B cell (primary cell): ENCODE measurements at regions of chr16 and their contacts with region 1.

Region 1: GRCh38 chr16:2883027-2883851 is at the start of gene FLYWCH2:
- DNase-seq: peak; percentile 99
- ATAC-seq: peak; percentile 81
- H3K4me3 ChIP-seq: peak within 1 kb of the TSS; percentile 64 to 85 (median 77)
- H3K4me3 Mint-ChIP-seq: peak within 1 kb of the TSS; percentile 97
- H3K27ac ChIP-seq: peak within 1 kb of the TSS; percentile 86 to 89
- H3K27ac Mint-ChIP-seq: peak within 1 kb of the TSS; percentile 98
- H3K4me1 ChIP-seq: peaks cover 6 to 14% of the 10 kb centered on the region in 2 donors
- H3K4me1 Mint-ChIP-seq: peaks cover 12% of the 10 kb centered on the region
- H3K27me3 ChIP-seq: peaks cover 0 to 2% (median 0%) of the 10 kb centered on the region in 4 experiments
- H3K27me3 Mint-ChIP-seq: no peaks in the 10 kb centered on the region
- CTCF ChIP-seq: no peak
- total RNA-seq, gene FLYWCH2: 22.3 and 26.5 TPM in 2 replicates

Region 2: GRCh38 chr16:2752035-2752849 is 131.0 kb before region 1 on chr16 and contains the start of gene SRRM2:
- CTCF ChIA-PET with region 1: no interaction called
- POLR2A ChIA-PET with region 1: no interaction called
- intact Hi-C with region 1: loop called (anchors 2 kb)
- DNase-seq: peak; percentile 100
- ATAC-seq: peak; percentile 83
- H3K4me3 ChIP-seq: peak within 1 kb of the TSS; percentile 68 to 97 (median 82)
- H3K4me3 Mint-ChIP-seq: peak within 1 kb of the TSS; percentile 95
- H3K27ac ChIP-seq: peak within 1 kb of the TSS; percentile 95 to 98
- H3K27ac Mint-ChIP-seq: peak within 1 kb of the TSS; percentile 99
- H3K4me1 ChIP-seq: peaks cover 36 to 45% of the 10 kb centered on the region in 2 donors
- H3K4me1 Mint-ChIP-seq: peaks cover 50% of the 10 kb centered on the region
- H3K27me3 ChIP-seq: no peaks in the 10 kb centered on the region
- H3K27me3 Mint-ChIP-seq: no peaks in the 10 kb centered on the region
- CTCF ChIP-seq: no peak
- total RNA-seq, gene SRRM2: 1,470 and 1,485 TPM in 2 replicates

Region 3: GRCh38 chr16:2816751-2817339 is 66.4 kb before region 1 on chr16 and contains the start of gene PRSS21:
- CTCF ChIA-PET with region 1: no interaction called
- POLR2A ChIA-PET with region 1: no interaction called
- intact Hi-C with region 1: no loop called
- DNase-seq: no peak
- ATAC-seq: peak; percentile 33
- H3K4me3 ChIP-seq: peak within 1 kb of the TSS in 1 of 5 experiments; percentile 21
- H3K4me3 Mint-ChIP-seq: no peak within 1 kb of the TSS
- H3K27ac ChIP-seq: no peak within 1 kb of the TSS
- H3K27ac Mint-ChIP-seq: no peak within 1 kb of the TSS
- H3K4me1 ChIP-seq: no peaks in the 10 kb centered on the region
- H3K4me1 Mint-ChIP-seq: no peaks in the 10 kb centered on the region
- H3K27me3 ChIP-seq: peaks cover 0 to 6% (median 0%) of the 10 kb centered on the region in 4 experiments
- H3K27me3 Mint-ChIP-seq: peaks cover 13% of the 10 kb centered on the region
- CTCF ChIP-seq: no peak
- total RNA-seq, gene PRSS21: 1.8 and 2.0 TPM in 2 replicates

Region 4: GRCh38 chr16:2897113-2897512 is 13.9 kb after region 1 on chr16:
- CTCF ChIA-PET with region 1: interaction called, 10 read pairs
- POLR2A ChIA-PET with region 1: interaction called, 8 read pairs
- intact Hi-C with region 1: loop called (anchors 2 kb)
- DNase-seq: peak; percentile 85
- ATAC-seq: peak; percentile 100
- H3K4me3 ChIP-seq: no peak overlapping the region
- H3K4me3 Mint-ChIP-seq: peak overlapping the region; percentile 70
- H3K27ac ChIP-seq: no peak overlapping the region
- H3K27ac Mint-ChIP-seq: peak overlapping the region; percentile 50
- H3K4me1 ChIP-seq: peaks cover 17 to 21% of the 10 kb centered on the region in 2 donors
- H3K4me1 Mint-ChIP-seq: peaks cover 13% of the 10 kb centered on the region
- H3K27me3 ChIP-seq: no peaks in the 10 kb centered on the region
- H3K27me3 Mint-ChIP-seq: no peaks in the 10 kb centered on the region
- CTCF ChIP-seq: no peak

Region 5: DNA sequence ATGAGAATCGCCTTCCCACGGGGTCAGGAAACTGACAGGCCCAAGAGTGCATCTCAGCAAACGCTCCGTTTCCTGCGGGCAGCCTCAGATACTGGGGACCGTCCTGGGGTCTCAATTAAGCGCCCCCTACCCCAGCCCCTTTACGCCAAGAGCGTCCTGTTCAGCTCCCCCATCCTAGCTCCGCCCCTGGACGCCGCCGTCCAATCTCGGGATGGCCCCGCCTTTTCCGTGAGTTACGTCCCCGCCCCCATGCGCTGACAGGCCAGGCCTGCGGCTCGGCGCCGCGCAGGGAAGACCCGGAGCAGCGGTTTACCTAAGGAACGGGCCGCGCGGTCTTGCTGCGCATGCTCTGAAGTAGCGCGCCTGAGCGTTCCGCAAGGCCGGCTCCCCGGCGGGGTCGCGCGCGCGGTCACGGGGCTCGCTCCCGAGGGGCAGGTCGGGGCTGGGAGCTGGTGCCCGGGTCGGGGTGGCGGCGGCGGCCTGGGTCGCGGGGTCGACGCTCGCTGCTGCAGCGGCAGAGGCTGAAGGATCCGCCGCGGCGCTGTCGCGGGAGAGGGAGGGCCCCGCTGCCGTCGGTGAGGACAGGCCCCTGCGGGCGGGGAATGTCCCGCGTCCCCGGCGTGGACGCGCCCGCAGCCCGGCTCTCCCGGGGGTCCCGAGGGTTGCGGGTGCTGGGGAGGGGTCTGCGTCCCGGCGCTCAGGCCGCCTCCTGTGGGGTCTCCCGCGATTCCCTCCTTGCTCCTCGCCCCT is 28.5 kb after region 1 on chr16 and contains the start of gene FLYWCH1:
- CTCF ChIA-PET with region 1: interaction called, 61 read pairs
- POLR2A ChIA-PET with region 1: interaction called, 18 read pairs
- intact Hi-C with region 1: loop called (anchors 1 kb)
- DNase-seq: peak; percentile 98
- ATAC-seq: peak; percentile 99
- H3K4me3 ChIP-seq: peak within 1 kb of the TSS; percentile 50 to 77 (median 70)
- H3K4me3 Mint-ChIP-seq: peak within 1 kb of the TSS; percentile 96
- H3K27ac ChIP-seq: peak within 1 kb of the TSS; percentile 38 to 66
- H3K27ac Mint-ChIP-seq: peak within 1 kb of the TSS; percentile 92
- H3K4me1 ChIP-seq: peaks cover 11 to 18% of the 10 kb centered on the region in 2 donors
- H3K4me1 Mint-ChIP-seq: peaks cover 29% of the 10 kb centered on the region
- H3K27me3 ChIP-seq: no peaks in the 10 kb centered on the region
- H3K27me3 Mint-ChIP-seq: no peaks in the 10 kb centered on the region
- CTCF ChIP-seq: no peak
- total RNA-seq, gene FLYWCH1: 119 and 120 TPM in 2 replicates

Region 6: GRCh38 chr16:2926650-2927646 is 43.7 kb after region 1 on chr16:
- CTCF ChIA-PET with region 1: interaction called, 61 read pairs
- POLR2A ChIA-PET with region 1: interaction called, 4 read pairs
- intact Hi-C with region 1: loop called (anchors 2 kb)
- DNase-seq: peak; percentile 91
- ATAC-seq: peak; percentile 100
- H3K4me3 ChIP-seq: no peak overlapping the region
- H3K4me3 Mint-ChIP-seq: peak overlapping the region; percentile 17
- H3K27ac ChIP-seq: no peak overlapping the region
- H3K27ac Mint-ChIP-seq: no peak overlapping the region
- H3K4me1 ChIP-seq: peaks cover 4 to 9% of the 10 kb centered on the region in 2 donors
- H3K4me1 Mint-ChIP-seq: peaks cover 7% of the 10 kb centered on the region
- H3K27me3 ChIP-seq: no peaks in the 10 kb centered on the region
- H3K27me3 Mint-ChIP-seq: no peaks in the 10 kb centered on the region
- CTCF ChIP-seq: peak; percentile 94

Region 7: DNA sequence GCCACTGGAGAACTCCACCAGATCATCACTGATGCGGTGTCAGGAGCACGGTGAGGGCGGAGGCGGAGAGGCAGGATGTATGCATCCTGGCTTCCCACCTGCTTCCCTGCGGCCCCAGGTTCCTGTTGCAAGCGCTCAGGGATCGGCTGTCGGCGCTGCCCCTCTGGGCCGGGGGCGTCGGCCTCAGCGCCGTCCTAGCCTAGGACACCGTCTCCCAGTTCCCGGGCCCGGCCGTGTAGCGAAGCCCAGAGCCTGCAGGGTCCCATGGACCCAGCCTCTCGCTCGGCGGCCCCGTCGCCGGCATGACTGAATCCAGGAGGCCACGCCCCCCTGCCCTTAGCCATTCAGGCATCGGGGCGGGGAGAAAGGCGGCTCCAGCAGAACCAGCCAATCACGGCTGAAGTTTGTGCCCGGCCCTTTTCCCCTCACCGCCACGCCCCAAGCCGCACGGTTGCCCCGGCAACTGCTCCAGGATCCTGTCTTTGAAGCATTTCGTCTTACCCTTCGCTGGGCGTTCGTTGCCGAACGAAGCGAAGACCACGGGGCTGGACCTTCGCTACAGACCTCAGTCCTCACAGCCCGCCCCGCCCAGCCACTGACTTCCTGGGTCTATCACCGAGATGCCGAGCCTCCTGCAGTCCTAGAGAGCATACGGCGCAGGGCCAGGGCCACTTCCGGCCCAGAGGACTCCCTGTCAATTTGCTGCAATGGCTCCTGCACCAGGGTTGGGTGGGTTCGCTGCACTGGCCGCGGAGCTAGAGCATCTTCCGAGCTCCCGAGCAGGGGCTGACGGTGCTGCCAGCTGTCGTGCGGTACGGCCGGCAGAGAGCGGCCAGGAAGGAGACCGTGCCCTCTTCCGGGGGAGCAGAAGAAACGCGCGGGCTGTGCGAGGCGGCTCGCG is 241.0 kb after region 1 on chr16:
- CTCF ChIA-PET with region 1: no interaction called
- POLR2A ChIA-PET with region 1: no interaction called
- intact Hi-C with region 1: loop called (anchors 5 kb)
- DNase-seq: peak; percentile 96
- ATAC-seq: peak; percentile 92
- H3K4me3 ChIP-seq: peak overlapping the region; percentile 4 to 94 (median 84)
- H3K4me3 Mint-ChIP-seq: peak overlapping the region; percentile 99
- H3K27ac ChIP-seq: peak overlapping the region; percentile 54 to 69
- H3K27ac Mint-ChIP-seq: peak overlapping the region; percentile 98
- H3K4me1 ChIP-seq: peaks cover 20 to 31% of the 10 kb centered on the region in 2 donors
- H3K4me1 Mint-ChIP-seq: peaks cover 28% of the 10 kb centered on the region
- H3K27me3 ChIP-seq: no peaks in the 10 kb centered on the region
- H3K27me3 Mint-ChIP-seq: no peaks in the 10 kb centered on the region
- CTCF ChIP-seq: no peak